ENCODE measurements at regions of chr7 and their contacts with region 1.

Region 1: DNA sequence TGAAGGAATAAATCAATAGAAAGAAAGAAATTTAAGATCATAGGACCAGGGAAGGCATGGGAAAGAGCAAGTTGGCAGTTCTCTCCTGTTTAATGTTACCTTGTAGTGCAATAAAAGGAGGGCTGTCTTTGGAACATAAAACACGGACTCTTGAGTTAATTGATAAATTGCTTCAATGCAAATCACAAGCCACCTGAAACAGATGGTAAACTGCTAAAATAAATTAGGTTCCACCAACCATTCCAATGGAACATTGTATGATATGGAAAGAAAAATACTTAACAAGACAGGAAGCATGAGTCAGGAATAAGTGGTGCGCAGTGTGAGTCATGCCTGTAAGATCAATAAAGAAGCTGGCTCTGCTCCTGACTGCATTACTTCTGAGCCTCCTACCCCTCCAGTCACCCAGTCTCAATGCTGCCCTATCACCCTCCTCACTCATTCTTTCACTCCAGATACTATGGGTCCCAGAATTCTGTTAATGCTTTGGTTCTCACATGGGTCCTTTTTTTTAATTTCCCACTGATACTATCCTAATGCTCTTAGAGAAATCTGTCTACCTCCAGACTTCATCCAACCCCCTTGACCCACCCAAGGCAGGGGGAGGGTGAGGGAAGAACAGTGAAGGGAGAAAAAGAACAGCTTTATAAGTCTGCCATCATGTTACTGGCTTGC is 78.9 kb downstream of the LRRC17 start:
- DNase-seq: no peak

Region 2: DNA sequence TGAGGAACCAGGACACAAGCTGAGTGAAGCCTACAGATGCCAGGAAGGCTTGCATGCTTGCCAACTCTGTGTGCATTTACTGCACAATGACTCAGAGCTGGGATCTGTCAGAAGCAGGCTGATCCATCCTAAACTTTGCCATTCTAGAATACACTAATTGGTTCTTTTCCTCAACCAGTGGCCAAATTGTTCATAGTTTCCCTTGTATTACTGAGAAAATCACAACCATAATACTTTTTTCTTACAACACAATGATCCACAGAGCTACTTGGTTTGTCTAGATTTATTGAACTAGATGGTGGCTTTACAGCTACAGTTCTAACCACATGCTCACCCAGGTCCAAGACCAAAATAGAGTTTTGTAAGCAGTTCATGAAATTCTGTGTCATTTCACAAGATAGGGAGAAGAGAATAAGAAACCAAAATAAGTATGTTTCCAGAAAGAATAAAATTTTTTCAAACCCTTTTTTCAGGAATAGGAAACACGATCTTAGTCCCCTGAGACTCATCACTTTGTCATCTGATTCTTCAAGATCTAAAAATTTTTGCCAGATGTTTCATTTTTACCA is 99.9 kb before region 1 on chr7:
- intact Hi-C with region 1: loop called (anchors 5 kb)
- DNase-seq: no peak

Region 3: GRCh38 chr7:102912742-102913141 is 78.9 kb before region 1 on chr7 and contains the start of gene LRRC17:
- intact Hi-C with region 1: no loop called
- DNase-seq: no peak
- total RNA-seq, gene LRRC17: 1.8 TPM

Region 4: GRCh38 chr7:102933763-102934162 is 57.9 kb before region 1 on chr7:
- intact Hi-C with region 1: loop called (anchors 10 kb)
- DNase-seq: peak; percentile 76